IMR-90 (cell line): ENCODE measurements at regions of chr1 and their contacts with region 1.

Region 1: GRCh38 chr1:154695985-154696384 is 88.0 kb upstream of the ADAR start:
- DNase-seq: no peak
- ATAC-seq: no peak
- H3K4me3 ChIP-seq: no peak overlapping the region
- H3K27ac ChIP-seq: no peak overlapping the region
- H3K4me1 ChIP-seq: no peaks in the 10 kb centered on the region
- H3K27me3 ChIP-seq: peaks cover 33% of the 10 kb centered on the region
- CTCF ChIP-seq: peak; percentile 36
- POLR2A ChIP-seq: no peak
- RAD21 ChIP-seq: peak; percentile 27

Region 2: GRCh38 chr1:154760469-154760933 is 64.5 kb after region 1 on chr1:
- CTCF ChIA-PET with region 1: no interaction called
- POLR2A ChIA-PET with region 1: no interaction called
- dilution Hi-C with region 1: no loop called
- in situ Hi-C with region 1: no loop called
- intact Hi-C with region 1: loop called (anchors 10 kb)
- DNase-seq: no peak
- ATAC-seq: peak; percentile 59; the same call in 1 of the 2 replicates
- H3K4me3 ChIP-seq: no peak overlapping the region
- H3K27ac ChIP-seq: no peak overlapping the region
- H3K4me1 ChIP-seq: no peaks in the 10 kb centered on the region
- H3K27me3 ChIP-seq: peaks cover 48% of the 10 kb centered on the region
- CTCF ChIP-seq: peak; percentile 46
- POLR2A ChIP-seq: no peak
- RAD21 ChIP-seq: peak; percentile 45

Region 3: GRCh38 chr1:154870115-154870571 is 174.2 kb after region 1 on chr1 and contains the start of gene KCNN3:
- CTCF ChIA-PET with region 1: no interaction called
- POLR2A ChIA-PET with region 1: no interaction called
- dilution Hi-C with region 1: no loop called
- in situ Hi-C with region 1: no loop called
- intact Hi-C with region 1: loop called (anchors 10 kb)
- DNase-seq: peak; percentile 82
- ATAC-seq: peak; percentile 100
- H3K4me3 ChIP-seq: no peak within 1 kb of the TSS
- H3K27ac ChIP-seq: no peak within 1 kb of the TSS
- H3K4me1 ChIP-seq: peaks cover 9% of the 10 kb centered on the region
- H3K27me3 ChIP-seq: peaks cover 68% of the 10 kb centered on the region
- CTCF ChIP-seq: no peak
- POLR2A ChIP-seq: no peak
- RAD21 ChIP-seq: no peak
- total RNA-seq, gene KCNN3: not detected in 2 replicates